Caco-2 (cell line): ENCODE measurements at regions of chr4 and their contacts with region 1.

Region 1: DNA sequence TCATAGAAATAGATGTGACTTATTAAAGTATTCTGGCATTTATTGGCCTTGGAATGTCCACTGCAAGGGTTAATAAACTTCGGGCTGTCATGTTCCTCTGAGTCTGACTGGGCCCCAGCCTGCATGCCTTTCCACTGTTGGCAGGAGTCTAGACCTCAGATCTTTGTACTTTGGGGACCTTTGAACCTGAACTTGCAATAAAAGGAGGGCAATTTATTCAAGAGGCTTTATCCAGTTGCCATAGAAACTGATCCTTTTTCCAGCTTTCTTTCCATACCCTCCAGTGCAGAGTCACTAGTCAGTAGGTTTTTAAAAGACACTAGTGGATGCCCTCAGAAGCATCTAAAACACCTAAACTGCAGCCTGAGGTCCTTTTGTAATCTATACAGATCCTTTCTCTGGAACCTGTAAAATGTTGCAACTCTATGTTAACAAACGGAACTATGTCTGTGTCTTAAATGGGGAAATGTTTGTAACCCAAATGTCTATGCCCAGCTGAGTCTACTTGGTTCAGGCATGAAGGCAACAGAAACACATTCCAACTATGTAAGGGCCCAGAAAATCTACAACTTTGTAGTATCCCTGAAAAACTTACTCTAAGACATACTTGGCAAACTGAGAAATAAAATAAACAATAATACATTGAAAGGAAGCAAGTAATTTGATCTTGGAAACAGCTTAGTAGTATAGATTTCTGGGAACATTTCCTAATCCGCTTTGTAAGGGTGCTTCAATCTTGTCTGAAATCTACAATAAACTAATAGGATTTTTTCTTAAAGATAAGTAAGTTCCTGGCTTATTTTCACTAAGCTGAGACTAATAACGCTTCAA is 41.5 kb downstream of the SOWAHB start:
- DNase-seq: peak; percentile 77 to 79
- H3K4me3 ChIP-seq: no peak overlapping the region
- H3K4me3 Mint-ChIP-seq: peak overlapping the region; percentile 24
- H3K27ac Mint-ChIP-seq: peak overlapping the region; percentile 25
- H3K4me1 ChIP-seq: peaks cover 21% of the 10 kb centered on the region
- H3K4me1 Mint-ChIP-seq: peaks cover 30% of the 10 kb centered on the region
- H3K27me3 ChIP-seq: no peaks in the 10 kb centered on the region
- H3K27me3 Mint-ChIP-seq: no peaks in the 10 kb centered on the region
- CTCF ChIP-seq: no peak

Region 2: DNA sequence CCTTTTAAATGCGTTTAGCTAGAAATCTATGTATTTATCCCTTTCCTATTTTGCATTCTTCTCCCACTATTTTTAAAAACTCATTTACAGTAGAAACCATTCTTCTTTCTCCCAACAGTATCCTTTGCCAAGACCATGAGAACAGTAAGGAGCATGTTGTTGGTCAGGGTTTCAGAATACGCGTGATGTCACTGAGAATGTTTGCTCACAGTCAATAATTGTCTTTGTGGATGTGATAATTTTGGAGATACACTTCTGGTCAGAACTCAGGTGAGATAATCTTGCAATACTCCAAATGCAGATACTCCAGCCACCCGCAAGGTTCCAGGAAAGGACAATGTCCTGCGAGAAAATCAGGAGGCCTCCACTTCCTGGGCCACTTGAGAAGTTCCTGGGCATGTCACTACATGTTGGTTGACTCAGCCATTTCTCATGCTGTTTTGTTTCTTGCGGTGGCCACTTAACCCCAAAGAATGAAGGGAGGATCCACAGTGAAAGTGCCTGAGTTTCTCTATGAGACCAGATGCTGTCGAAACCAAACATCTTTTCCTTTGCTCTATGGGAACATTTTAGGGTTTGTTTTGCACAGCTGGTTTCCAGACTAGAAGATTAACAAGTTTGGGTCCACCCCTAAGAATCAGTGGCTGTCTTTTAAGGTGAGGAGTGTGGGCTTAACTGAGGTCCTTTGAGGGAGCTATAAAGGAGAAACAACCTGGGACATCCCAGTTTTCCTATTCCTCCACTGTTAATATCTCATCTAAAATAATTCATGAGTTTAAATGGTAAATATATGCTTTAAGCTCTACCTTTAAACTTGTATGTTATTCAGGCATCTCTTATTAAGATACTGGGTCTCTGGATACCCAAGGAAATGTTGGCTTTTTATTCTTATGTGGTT is 74.5 kb before region 1 on chr4:
- CTCF ChIA-PET with region 1: no interaction called
- POLR2A ChIA-PET with region 1: no interaction called
- intact Hi-C with region 1: loop called (anchors 5 kb)
- DNase-seq: peak; percentile 56 to 83
- H3K4me3 ChIP-seq: no peak overlapping the region
- H3K4me3 Mint-ChIP-seq: peak overlapping the region; percentile 9
- H3K27ac Mint-ChIP-seq: peak overlapping the region; percentile 77
- H3K4me1 ChIP-seq: peaks cover 22% of the 10 kb centered on the region
- H3K4me1 Mint-ChIP-seq: peaks cover 13% of the 10 kb centered on the region
- H3K27me3 ChIP-seq: no peaks in the 10 kb centered on the region
- H3K27me3 Mint-ChIP-seq: no peaks in the 10 kb centered on the region
- CTCF ChIP-seq: no peak

Region 3: GRCh38 chr4:76830964-76831703 is 25.3 kb before region 1 on chr4:
- CTCF ChIA-PET with region 1: no interaction called
- POLR2A ChIA-PET with region 1: no interaction called
- intact Hi-C with region 1: loop called (anchors 1 kb)
- DNase-seq: peak; percentile 64 to 78
- H3K4me3 ChIP-seq: peak overlapping the region; percentile 41
- H3K4me3 Mint-ChIP-seq: peak overlapping the region; percentile 71
- H3K27ac Mint-ChIP-seq: peak overlapping the region; percentile 92
- H3K4me1 ChIP-seq: peaks cover 24% of the 10 kb centered on the region
- H3K4me1 Mint-ChIP-seq: peaks cover 27% of the 10 kb centered on the region
- H3K27me3 ChIP-seq: no peaks in the 10 kb centered on the region
- H3K27me3 Mint-ChIP-seq: no peaks in the 10 kb centered on the region
- CTCF ChIP-seq: no peak

Region 4: GRCh38 chr4:76881375-76881774 is 24.9 kb after region 1 on chr4:
- CTCF ChIA-PET with region 1: no interaction called
- POLR2A ChIA-PET with region 1: no interaction called
- intact Hi-C with region 1: loop called (anchors 2 kb)
- DNase-seq: peak; percentile 57 to 72
- H3K4me3 ChIP-seq: no peak overlapping the region
- H3K4me3 Mint-ChIP-seq: no peak overlapping the region
- H3K27ac Mint-ChIP-seq: no peak overlapping the region
- H3K4me1 ChIP-seq: peaks cover 10% of the 10 kb centered on the region
- H3K4me1 Mint-ChIP-seq: peaks cover 14% of the 10 kb centered on the region
- H3K27me3 ChIP-seq: no peaks in the 10 kb centered on the region
- H3K27me3 Mint-ChIP-seq: no peaks in the 10 kb centered on the region
- CTCF ChIP-seq: no peak